Activated naive CD4-positive, alpha-beta T cell treated with anti-CD3 and anti-CD28 coated beads for 36 hours (primary cell): ENCODE measurements at regions of chr5 and their contacts with region 1.

Region 1: DNA sequence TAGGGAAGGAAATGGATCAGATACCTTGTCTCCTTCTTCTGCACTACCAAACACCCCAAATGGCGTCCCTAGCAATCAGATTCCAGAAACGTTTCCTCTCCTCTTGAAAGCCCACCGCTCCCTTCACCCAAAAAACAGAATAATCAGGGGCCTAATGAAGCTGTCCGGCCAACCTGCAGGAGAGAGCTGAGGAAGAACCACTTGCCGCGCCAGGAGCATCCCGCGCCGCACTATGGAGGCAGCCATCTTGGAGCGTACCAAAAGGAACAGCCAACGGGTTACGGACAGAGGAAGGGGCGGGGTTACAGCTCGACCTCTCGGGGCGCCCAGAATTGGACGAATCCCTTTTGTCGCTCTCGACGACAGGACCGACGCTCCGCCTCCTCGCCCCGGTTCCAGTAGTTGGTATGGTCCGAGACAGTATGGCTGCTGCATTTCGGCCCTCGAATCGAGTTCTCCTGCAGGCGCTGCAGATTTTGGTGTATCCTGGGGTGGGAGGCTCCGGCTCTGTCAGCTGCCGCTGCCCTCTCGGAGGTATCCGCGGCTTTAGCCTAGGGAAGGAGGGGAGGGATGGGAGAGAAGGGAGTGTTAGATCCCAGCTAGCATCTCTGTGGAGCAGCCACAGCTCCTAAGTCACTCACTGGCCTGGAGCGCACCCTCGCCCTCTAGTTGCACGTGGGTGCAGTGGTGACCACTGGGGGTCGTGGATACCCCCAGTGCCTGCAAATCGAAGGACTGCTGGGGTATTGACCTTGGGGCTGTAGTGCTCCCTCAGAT is at the starts of genes MRPS27 and PTCD2:
- DNase-seq: peak; percentile 97
- H3K4me3 Mint-ChIP-seq: peak within 1 kb of the TSS; percentile 80
- H3K27ac Mint-ChIP-seq: peak within 1 kb of the TSS; percentile 91
- H3K4me1 Mint-ChIP-seq: peaks cover 45% of the 10 kb centered on the region
- H3K27me3 Mint-ChIP-seq: no peaks in the 10 kb centered on the region
- total RNA-seq, gene MRPS27: 86.0 to 95.8 TPM
- total RNA-seq, gene PTCD2: 10.1 to 11.6 TPM

Region 2: GRCh38 chr5:72347801-72348305 is 27.7 kb after region 1 on chr5:
- CTCF ChIA-PET with region 1: no interaction called
- intact Hi-C with region 1: loop called (anchors 1 kb)
- DNase-seq: peak; percentile 36
- H3K4me3 Mint-ChIP-seq: no peak overlapping the region
- H3K27ac Mint-ChIP-seq: peak overlapping the region; percentile 48
- H3K4me1 Mint-ChIP-seq: peaks cover 24% of the 10 kb centered on the region
- H3K27me3 Mint-ChIP-seq: no peaks in the 10 kb centered on the region

Region 3: DNA sequence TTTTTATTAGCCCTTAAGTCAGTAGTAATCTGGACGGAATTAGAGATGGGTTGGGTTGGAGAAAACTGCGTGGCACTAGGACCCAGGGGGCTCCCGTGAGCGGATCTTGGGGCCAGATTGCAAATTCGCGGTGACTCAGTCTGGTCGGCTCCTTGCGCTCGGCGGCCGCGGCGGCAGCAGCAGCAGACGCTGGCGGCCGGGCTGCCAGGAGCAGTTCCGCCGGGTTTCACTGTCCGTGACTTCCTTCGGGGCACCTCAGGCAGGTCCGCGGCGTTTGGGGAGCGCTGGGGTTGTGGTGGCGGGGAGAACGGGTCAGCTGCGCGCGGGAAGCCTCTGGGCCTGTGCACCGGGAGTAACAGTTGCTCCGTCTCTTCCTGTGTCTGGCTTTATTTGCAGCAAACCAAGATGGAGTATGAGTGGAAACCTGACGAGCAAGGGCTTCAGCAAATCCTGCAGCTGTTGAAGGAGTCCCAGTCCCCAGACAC is 527.9 kb after region 1 on chr5:
- CTCF ChIA-PET with region 1: no interaction called
- intact Hi-C with region 1: loop called (anchors 2 kb)
- DNase-seq: peak; percentile 90
- H3K4me3 Mint-ChIP-seq: peak overlapping the region; percentile 97
- H3K27ac Mint-ChIP-seq: peak overlapping the region; percentile 97
- H3K4me1 Mint-ChIP-seq: peaks cover 49% of the 10 kb centered on the region
- H3K27me3 Mint-ChIP-seq: no peaks in the 10 kb centered on the region